Activated naive CD4-positive, alpha-beta T cell treated with anti-CD3 and anti-CD28 coated beads, Interleukin-2, amount 10 ng/mL, durations not matched to agents 7 days and 5 days (primary cell): ENCODE measurements at regions of chr1 and their contacts with region 1.

Region 1: DNA sequence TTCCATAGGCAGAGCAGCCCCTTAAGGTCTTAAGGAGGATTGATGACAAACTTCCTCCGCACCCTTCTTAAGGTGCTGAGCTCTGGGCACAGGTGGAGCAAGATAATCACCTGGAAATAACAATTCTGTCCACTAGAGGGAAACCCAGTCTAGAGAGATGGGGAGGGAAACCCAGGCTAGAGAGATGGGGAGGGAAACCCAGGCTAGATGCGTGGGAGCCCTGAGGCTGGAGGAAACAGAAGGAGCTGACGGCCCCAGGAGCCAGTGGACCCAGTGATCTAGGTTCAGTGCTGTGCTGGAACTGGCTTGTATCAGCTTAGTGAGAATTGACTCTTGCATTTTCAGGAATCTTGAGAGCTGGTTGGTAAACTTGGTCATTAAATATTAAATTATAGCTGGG is 17.8 kb upstream of the MYCL start:
- DNase-seq: peak; percentile 55
- H3K4me3 Mint-ChIP-seq: no peak overlapping the region
- H3K27ac Mint-ChIP-seq: no peak overlapping the region
- H3K4me1 Mint-ChIP-seq: no peaks in the 10 kb centered on the region
- H3K27me3 Mint-ChIP-seq: peaks cover 42% of the 10 kb centered on the region

Region 2: GRCh38 chr1:39632682-39633417 is 286.7 kb before region 1 on chr1:
- CTCF ChIA-PET with region 1: no interaction called
- DNase-seq: no peak
- H3K4me3 Mint-ChIP-seq: no peak overlapping the region
- H3K27ac Mint-ChIP-seq: no peak overlapping the region
- H3K4me1 Mint-ChIP-seq: no peaks in the 10 kb centered on the region
- H3K27me3 Mint-ChIP-seq: peaks cover 52% of the 10 kb centered on the region

Region 3: DNA sequence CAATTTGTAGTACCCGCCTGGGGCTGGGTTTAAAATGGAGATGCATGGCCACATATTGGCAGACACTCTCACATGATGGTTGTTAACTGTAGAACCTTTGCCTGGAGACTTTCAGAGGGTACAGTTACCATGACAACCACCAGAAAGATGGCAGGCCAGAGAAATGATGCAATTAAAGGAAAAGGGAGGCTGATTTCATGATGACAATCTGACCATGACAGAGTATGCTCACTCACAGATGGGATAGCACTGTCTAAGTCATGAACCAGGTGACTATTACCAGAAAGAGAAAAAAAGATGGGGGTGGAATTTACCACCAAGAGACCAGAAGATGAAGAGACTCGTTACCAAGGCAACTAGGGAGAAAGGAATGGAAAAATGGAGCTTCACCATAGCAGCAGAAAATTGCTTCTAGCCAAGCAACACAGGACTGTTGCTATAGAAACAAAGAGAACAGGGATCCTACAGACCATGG is 32.8 kb before region 1 on chr1:
- CTCF ChIA-PET with region 1: no interaction called
- DNase-seq: no peak
- H3K4me3 Mint-ChIP-seq: no peak overlapping the region
- H3K27ac Mint-ChIP-seq: no peak overlapping the region
- H3K4me1 Mint-ChIP-seq: peaks cover 21% of the 10 kb centered on the region
- H3K27me3 Mint-ChIP-seq: peaks cover 27% of the 10 kb centered on the region

Region 4: GRCh38 chr1:39954816-39955546 is 35.4 kb after region 1 on chr1 and contains the start of gene MFSD2A:
- CTCF ChIA-PET with region 1: interaction called, 10 read pairs
- DNase-seq: peak; percentile 93
- H3K4me3 Mint-ChIP-seq: peak within 1 kb of the TSS; percentile 88
- H3K27ac Mint-ChIP-seq: no peak within 1 kb of the TSS
- H3K4me1 Mint-ChIP-seq: peaks cover 26% of the 10 kb centered on the region
- H3K27me3 Mint-ChIP-seq: peaks cover 31% of the 10 kb centered on the region

Region 5: GRCh38 chr1:40032240-40032891 is 112.8 kb after region 1 on chr1:
- CTCF ChIA-PET with region 1: interaction called, 90 read pairs
- DNase-seq: peak; percentile 69
- H3K4me3 Mint-ChIP-seq: no peak overlapping the region
- H3K27ac Mint-ChIP-seq: peak overlapping the region; percentile 20
- H3K4me1 Mint-ChIP-seq: peaks cover 54% of the 10 kb centered on the region
- H3K27me3 Mint-ChIP-seq: no peaks in the 10 kb centered on the region